ENCODE measurements at regions of chr4 and their contacts with region 1.

Region 1: DNA sequence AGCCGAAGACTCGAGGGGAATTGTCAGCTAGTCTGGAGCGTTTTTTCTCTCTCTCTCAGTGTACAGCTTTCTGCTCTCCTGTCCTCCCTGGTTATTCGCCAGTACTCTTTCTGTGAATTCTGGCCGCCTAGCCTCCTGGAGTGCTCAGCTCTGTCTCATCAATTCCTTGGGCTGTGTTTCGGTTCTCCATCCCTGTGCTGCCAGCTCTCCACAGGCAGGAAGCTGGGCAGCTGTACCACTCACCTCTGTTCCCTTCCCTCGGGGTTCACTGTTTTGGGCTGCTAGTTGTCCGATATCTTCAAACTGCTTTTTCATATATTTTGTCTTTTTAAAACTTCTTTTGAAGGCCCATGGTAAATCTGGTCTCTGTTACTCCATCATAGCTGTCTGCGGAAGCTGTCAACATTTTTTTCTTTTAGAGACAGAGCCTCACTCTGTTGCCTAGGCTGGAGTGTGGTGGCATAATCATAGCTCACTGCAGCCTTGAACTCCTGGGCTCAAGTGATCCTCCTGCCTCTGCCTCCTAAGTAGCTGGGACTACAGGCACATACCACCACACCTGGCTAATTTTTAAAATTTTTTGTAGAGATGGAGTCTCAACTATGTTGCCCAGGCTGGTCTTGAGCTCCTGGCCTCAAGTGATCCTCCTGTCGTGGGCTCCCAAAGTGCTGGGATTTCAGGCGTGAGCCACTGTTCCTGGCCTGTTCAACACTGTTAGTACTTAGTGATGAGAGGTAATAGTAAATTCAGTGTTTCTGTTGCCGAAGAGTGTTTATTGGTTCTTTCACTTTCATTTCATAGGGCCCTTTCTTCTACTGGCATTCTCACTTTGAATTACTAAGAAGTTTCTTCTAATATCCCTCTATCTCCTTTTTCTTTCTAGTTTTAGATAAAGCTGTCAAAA is 18.6 kb downstream of the ZCCHC4 start:
- DNase-seq: peak; percentile 22
- H3K4me3 Mint-ChIP-seq: peak overlapping the region; percentile 84
- H3K27ac Mint-ChIP-seq: peak overlapping the region; percentile 93
- H3K4me1 Mint-ChIP-seq: peaks cover 21% of the 10 kb centered on the region
- H3K27me3 Mint-ChIP-seq: no peaks in the 10 kb centered on the region

Region 2: GRCh38 chr4:25159884-25160713 is 171.1 kb before region 1 on chr4 and contains the start of gene SEPSECS:
- CTCF ChIA-PET with region 1: interaction called, 3 read pairs
- POLR2A ChIA-PET with region 1: interaction called, 25 read pairs
- DNase-seq: peak; percentile 95
- H3K4me3 Mint-ChIP-seq: peak within 1 kb of the TSS; percentile 93
- H3K27ac Mint-ChIP-seq: peak within 1 kb of the TSS; percentile 93
- H3K4me1 Mint-ChIP-seq: peaks cover 45% of the 10 kb centered on the region
- H3K27me3 Mint-ChIP-seq: no peaks in the 10 kb centered on the region
- total RNA-seq, gene SEPSECS: 15.1 to 15.2 TPM

Region 3: DNA sequence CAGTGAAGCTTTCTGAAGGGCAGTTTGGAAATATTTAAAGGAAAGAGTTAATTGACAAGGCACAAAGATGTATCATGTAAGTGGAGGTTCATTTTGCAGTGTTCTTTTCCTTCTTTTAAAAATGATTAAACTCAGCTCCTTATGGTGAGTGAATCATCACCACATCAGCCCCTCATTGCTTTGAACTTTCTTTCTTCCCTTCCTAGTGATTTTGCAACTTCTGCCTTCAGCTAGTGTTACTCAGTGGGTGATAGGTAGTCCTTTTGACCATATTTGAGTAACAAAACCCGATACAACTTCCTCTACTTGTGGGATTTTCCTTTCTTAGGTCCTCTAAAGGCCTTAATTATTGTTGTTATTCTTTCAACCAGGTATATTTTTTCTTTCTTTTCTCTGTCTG is 10.4 kb before region 1 on chr4:
- CTCF ChIA-PET with region 1: interaction called, 6 read pairs
- POLR2A ChIA-PET with region 1: interaction called, 15 read pairs
- DNase-seq: no peak
- H3K4me3 Mint-ChIP-seq: no peak overlapping the region
- H3K27ac Mint-ChIP-seq: peak overlapping the region; percentile 33
- H3K4me1 Mint-ChIP-seq: peaks cover 28% of the 10 kb centered on the region
- H3K27me3 Mint-ChIP-seq: no peaks in the 10 kb centered on the region

Region 4: DNA sequence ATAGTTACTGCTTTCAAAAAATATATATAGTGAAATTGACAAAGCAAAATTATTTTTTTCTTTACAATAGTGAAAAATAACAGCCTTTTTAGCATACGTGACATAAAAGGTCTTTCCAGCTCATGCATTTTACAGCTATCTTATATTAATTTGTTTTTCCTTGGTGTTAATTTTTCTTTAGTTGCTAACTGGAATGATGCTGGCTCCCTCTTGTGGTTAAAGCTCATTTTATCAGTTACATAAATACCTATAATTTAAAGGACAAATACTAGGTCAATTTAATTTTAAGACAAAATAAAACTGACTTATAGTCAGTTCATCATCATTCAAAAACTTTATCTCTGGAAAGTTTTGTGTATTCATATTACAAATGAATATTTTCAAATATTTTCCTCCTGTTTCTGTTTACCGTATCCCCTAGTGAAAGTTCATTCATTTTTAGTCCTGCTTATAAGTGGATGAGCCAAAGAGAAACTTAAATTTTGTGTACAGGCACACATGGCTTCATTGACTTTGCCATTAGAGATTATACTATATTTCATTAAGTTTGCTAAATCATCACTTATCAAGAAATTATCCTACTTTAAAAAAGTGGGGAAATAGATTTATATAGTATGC is 36.0 kb after region 1 on chr4:
- CTCF ChIA-PET with region 1: interaction called, 12 read pairs
- POLR2A ChIA-PET with region 1: interaction called, 3 read pairs
- DNase-seq: no peak
- H3K4me3 Mint-ChIP-seq: no peak overlapping the region
- H3K27ac Mint-ChIP-seq: no peak overlapping the region
- H3K4me1 Mint-ChIP-seq: no peaks in the 10 kb centered on the region
- H3K27me3 Mint-ChIP-seq: no peaks in the 10 kb centered on the region

Region 5: DNA sequence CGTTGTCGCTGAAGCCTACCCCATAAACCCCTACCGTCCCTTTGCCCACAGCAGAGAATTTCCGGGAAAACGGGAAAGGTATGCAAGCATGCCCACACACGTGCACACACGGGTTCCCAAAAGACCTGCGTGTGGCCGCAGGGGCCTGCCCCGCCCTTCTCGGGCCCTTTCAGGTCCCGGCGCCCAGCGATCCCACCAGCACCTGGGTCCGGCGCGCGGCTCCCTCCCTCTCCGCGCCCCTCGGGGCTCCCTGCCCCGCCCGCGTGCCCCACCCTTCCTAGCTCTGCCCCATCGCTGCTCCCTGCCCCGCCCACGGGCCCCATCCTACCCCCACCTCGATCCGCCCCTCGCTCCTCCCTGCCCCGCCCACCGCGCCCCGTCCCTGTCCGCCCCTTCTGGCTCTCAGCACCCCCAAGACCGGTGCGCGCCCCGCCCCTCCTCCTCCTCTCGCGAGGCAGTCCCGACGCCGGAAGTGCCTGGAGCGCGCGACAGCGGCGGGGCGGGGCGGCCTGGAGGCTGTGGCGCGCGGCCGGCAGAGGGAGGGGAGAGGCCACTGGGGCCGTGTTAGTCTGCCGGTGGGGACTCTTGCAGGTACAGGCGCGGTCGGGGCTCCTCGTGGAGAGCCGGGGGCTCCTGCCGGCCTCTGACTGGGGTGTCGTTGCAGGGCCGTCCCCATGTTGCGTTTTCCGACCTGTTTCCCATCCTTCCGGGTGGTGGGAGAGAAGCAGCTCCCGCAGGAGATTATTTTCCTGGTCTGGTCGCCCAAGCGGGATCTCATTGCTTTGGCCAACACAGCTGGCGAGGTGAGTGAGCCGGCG is 45.8 kb after region 1 on chr4 and contains the start of gene ANAPC4:
- CTCF ChIA-PET with region 1: interaction called, 7 read pairs
- POLR2A ChIA-PET with region 1: interaction called, 12 read pairs
- DNase-seq: peak; percentile 98
- H3K4me3 Mint-ChIP-seq: no peak within 1 kb of the TSS
- H3K27ac Mint-ChIP-seq: peak within 1 kb of the TSS; percentile 85
- H3K4me1 Mint-ChIP-seq: peaks cover 11% of the 10 kb centered on the region
- H3K27me3 Mint-ChIP-seq: no peaks in the 10 kb centered on the region
- total RNA-seq, gene ANAPC4: 41.0 to 41.2 TPM

Measured in activated CD4-positive, alpha-beta memory T cell treated with anti-CD3 and anti-CD28 coated beads, Interleukin-2, amount 10 ng/mL, durations not matched to agents 7 days and 5 days (primary cell).